ENCODE measurements at regions of chr9 and their contacts with region 1.

Region 1: GRCh38 chr9:76037826-76038225 is 147.4 kb downstream of the PCSK5 start:
- DNase-seq: no peak
- H3K4me3 ChIP-seq: no peak overlapping the region
- H3K27ac ChIP-seq: no peak overlapping the region
- H3K4me1 ChIP-seq: peaks cover 0 to 1% of the 10 kb centered on the region in 2 donors
- H3K27me3 ChIP-seq: no peaks in the 10 kb centered on the region
- CTCF ChIP-seq: no peak

Region 2: DNA sequence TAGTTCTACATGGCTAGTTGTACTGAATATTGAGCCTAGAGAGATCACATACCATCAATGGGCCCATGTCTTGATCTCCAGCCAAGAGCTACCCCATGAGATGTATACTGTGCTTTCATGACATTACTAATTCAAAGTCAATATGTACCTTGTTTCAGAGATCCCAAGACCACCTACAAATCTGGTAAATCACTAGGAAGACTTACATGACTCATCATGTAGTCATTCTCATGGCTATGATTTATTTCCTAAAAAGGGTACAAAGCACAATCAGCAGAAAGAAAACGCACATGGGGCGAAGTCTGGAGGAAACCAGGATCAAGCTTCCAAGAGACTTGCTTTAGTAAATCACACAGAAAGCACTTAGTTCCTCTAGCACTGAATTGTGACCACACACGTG is 44.4 kb before region 1 on chr9:
- intact Hi-C with region 1: loop called (anchors 5 kb)
- DNase-seq: no peak
- H3K4me3 ChIP-seq: no peak overlapping the region
- H3K27ac ChIP-seq: peak overlapping the region; percentile 0 to 58
- H3K4me1 ChIP-seq: peaks cover 0 to 10% of the 10 kb centered on the region in 2 donors
- H3K27me3 ChIP-seq: no peaks in the 10 kb centered on the region
- CTCF ChIP-seq: no peak

Measured in ascending aorta (tissue), 2 donors.